ENCODE measurements at regions of chr3 and their contacts with region 1.

Region 1: DNA sequence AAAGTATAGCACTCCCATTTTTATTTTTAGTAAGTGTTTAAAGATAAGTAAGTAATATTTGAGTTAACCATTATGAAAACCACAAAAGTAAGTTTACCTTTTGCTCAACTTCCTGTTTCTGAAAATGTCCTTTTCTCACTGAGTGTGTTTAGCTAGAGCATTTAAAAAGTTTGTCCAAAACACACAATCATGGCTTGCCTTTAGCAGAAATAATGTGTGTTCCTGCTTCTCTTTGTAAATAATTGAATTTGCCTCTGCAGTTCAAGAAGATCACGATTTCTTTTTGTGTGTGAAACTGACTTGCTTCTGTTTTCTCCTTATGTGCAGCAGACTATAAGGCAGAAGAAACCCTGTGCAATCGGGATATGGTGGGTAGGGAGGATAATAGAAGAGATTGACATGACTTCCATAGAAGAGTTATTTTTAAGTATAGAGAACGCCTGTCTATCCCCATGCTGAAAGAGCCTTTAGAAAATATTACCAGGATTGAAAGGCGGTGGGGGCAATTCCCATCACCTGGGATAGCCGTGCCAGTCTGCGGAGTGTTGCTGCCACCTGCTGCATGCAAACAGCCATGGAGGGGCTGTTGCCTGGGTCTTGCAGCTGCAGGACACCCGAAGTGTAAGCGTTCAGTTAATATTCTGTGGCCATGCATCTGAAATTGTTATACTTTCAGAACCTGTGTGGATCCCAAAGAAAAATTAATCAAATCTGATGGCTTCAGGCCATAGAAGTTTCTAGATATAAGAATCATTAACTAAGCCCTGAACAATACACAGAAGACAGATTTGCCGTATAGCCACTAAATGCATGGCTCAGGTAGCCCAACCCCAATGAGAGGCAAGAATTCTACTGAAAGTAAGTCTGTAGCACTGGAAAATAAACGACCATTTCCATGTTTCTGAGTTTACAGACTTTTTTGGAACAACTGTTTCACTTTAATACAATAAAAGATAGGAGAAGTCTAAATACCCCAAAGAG is 2.4 kb upstream of the CD96 start:
- DNase-seq: peak; percentile 32 to 69 (median 57)
- ATAC-seq: peak; percentile 54
- H3K4me3 ChIP-seq: peak overlapping the region; percentile 40
- H3K4me3 Mint-ChIP-seq: peak overlapping the region; percentile 77 to 92 (median 82)
- H3K27ac ChIP-seq: peak overlapping the region; percentile 42
- H3K27ac Mint-ChIP-seq: peak overlapping the region in 5 of 9 donors; percentile 78 to 99 (median 98)
- H3K4me1 ChIP-seq: peaks cover 33 to 38% of the 10 kb centered on the region in 2 donors
- H3K4me1 Mint-ChIP-seq: peaks cover 27 to 65% (median 55%) of the 10 kb centered on the region in 7 donors
- H3K27me3 ChIP-seq: no peaks in the 10 kb centered on the region
- H3K27me3 Mint-ChIP-seq: no peaks in the 10 kb centered on the region

Region 2: GRCh38 chr3:110623571-110623970 is 916.1 kb before region 1 on chr3:
- CTCF ChIA-PET with region 1: no interaction called
- POLR2A ChIA-PET with region 1: no interaction called
- intact Hi-C with region 1: loop called in 1 of 2 experiments (anchors 10 kb)
- DNase-seq: no peak
- ATAC-seq: no peak
- H3K4me3 ChIP-seq: no peak overlapping the region
- H3K4me3 Mint-ChIP-seq: no peak overlapping the region
- H3K27ac ChIP-seq: no peak overlapping the region
- H3K27ac Mint-ChIP-seq: no peak overlapping the region
- H3K4me1 ChIP-seq: peaks cover 0 to 7% of the 10 kb centered on the region in 2 donors
- H3K4me1 Mint-ChIP-seq: peaks cover 0 to 29% (median 22%) of the 10 kb centered on the region in 7 donors
- H3K27me3 ChIP-seq: no peaks in the 10 kb centered on the region
- H3K27me3 Mint-ChIP-seq: peaks cover 0 to under 1% (median 0%) of the 10 kb centered on the region in 5 donors

Region 3: DNA sequence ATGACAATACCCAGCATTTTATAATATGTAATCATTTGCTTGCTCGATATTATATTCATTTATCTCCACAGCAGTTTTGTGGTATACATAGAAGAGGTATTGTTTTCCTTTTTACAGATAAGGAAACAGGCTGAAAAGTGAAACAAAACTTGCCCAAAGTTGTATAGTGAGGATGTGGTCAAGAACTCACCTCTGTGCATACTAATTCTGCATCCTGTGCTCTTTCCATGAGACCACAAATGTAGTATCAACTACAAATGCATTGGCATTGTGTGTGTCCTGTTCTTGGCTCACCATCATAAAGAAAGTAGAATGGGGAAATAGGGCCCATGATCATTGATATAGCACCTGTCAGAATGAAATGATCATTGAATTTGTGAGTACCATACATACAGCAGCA is 300.8 kb before region 1 on chr3:
- CTCF ChIA-PET with region 1: no interaction called
- POLR2A ChIA-PET with region 1: no interaction called
- intact Hi-C with region 1: loop called in 1 of 2 experiments (anchors 2 kb)
- DNase-seq: peak in 6 of 9 donors; percentile 16 to 47 (median 34)
- ATAC-seq: peak; percentile 75
- H3K4me3 ChIP-seq: no peak overlapping the region
- H3K4me3 Mint-ChIP-seq: peak overlapping the region in 8 of 10 donors; percentile 0 to 76 (median 54)
- H3K27ac ChIP-seq: peak overlapping the region; percentile 4
- H3K27ac Mint-ChIP-seq: peak overlapping the region; percentile 0 to 90 (median 64)
- H3K4me1 ChIP-seq: peaks cover 6 to 15% of the 10 kb centered on the region in 2 donors
- H3K4me1 Mint-ChIP-seq: peaks cover 11 to 47% (median 35%) of the 10 kb centered on the region in 7 donors
- H3K27me3 ChIP-seq: no peaks in the 10 kb centered on the region
- H3K27me3 Mint-ChIP-seq: no peaks in the 10 kb centered on the region

Region 4: DNA sequence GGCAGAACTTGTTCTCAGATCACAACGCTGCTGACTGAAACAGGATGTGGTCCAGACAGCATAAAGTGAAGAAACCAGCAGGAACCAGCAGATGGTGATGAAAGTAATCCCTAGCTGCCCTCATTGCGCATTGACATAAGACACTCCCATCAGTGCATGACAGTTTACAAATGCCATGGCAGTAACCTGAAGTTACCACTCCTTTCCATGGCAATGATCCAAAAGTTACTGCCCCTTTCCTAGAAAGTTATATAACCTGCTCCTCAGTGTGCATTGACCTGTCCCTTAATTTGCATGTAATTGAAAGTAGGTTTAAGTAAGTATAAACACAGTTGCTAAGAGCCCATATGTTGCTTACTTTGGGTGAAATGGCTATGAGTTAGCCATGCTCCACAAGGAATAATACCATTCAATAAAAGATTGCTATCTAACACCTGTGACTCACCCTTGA is 146.7 kb before region 1 on chr3:
- CTCF ChIA-PET with region 1: interaction called, 3 read pairs
- POLR2A ChIA-PET with region 1: no interaction called
- intact Hi-C with region 1: loop called (anchors 1 to 5 kb)
- DNase-seq: peak in 7 of 9 donors; percentile 40 to 78 (median 75)
- ATAC-seq: peak; percentile 99
- H3K4me3 ChIP-seq: no peak overlapping the region
- H3K4me3 Mint-ChIP-seq: peak overlapping the region in 9 of 10 donors; percentile 1 to 59 (median 22)
- H3K27ac ChIP-seq: peak overlapping the region; percentile 25
- H3K27ac Mint-ChIP-seq: peak overlapping the region in 8 of 9 donors; percentile 65 to 96 (median 88)
- H3K4me1 ChIP-seq: peaks cover 0 to 13% of the 10 kb centered on the region in 2 donors
- H3K4me1 Mint-ChIP-seq: peaks cover 10 to 29% (median 23%) of the 10 kb centered on the region in 7 donors
- H3K27me3 ChIP-seq: no peaks in the 10 kb centered on the region
- H3K27me3 Mint-ChIP-seq: no peaks in the 10 kb centered on the region

Region 5: DNA sequence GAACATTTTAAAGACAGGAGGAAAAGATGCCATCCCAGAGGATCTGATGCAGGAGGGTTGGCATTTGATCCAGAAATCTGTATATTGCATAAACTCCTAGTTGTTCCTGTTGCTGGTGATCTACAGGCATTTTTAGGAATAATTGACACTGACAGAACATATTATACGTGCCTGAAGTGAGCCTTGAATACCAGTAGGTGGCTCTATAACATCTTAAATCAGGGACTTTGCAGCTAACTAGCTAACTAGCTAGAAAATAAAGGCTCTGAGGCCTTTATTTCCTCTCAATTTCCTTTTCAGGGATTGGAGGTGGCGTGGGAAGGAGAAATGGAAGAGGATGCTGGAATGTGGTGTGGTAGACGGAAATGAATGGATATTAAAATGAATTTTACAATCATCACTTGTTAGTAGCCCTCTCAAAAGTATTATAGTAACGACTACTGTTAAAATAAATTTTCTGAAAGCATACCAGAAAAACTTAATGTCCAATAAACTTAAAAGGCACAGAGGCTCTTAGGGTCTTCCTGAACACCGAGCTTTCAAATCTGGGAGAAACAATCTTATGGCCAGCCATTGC is 129.4 kb after region 1 on chr3:
- CTCF ChIA-PET with region 1: no interaction called
- POLR2A ChIA-PET with region 1: interaction called, 3 read pairs
- intact Hi-C with region 1: loop called (anchors 1 kb)
- DNase-seq: peak in 7 of 9 donors; percentile 22 to 64 (median 53)
- ATAC-seq: peak; percentile 53
- H3K4me3 ChIP-seq: no peak overlapping the region
- H3K4me3 Mint-ChIP-seq: peak overlapping the region in 8 of 10 donors; percentile 20 to 74 (median 36)
- H3K27ac ChIP-seq: peak overlapping the region; percentile 14
- H3K27ac Mint-ChIP-seq: peak overlapping the region; percentile 26 to 94 (median 76)
- H3K4me1 ChIP-seq: peaks cover 52 to 59% of the 10 kb centered on the region in 2 donors
- H3K4me1 Mint-ChIP-seq: peaks cover 46 to 91% (median 85%) of the 10 kb centered on the region in 7 donors
- H3K27me3 ChIP-seq: no peaks in the 10 kb centered on the region
- H3K27me3 Mint-ChIP-seq: no peaks in the 10 kb centered on the region

Region 6: DNA sequence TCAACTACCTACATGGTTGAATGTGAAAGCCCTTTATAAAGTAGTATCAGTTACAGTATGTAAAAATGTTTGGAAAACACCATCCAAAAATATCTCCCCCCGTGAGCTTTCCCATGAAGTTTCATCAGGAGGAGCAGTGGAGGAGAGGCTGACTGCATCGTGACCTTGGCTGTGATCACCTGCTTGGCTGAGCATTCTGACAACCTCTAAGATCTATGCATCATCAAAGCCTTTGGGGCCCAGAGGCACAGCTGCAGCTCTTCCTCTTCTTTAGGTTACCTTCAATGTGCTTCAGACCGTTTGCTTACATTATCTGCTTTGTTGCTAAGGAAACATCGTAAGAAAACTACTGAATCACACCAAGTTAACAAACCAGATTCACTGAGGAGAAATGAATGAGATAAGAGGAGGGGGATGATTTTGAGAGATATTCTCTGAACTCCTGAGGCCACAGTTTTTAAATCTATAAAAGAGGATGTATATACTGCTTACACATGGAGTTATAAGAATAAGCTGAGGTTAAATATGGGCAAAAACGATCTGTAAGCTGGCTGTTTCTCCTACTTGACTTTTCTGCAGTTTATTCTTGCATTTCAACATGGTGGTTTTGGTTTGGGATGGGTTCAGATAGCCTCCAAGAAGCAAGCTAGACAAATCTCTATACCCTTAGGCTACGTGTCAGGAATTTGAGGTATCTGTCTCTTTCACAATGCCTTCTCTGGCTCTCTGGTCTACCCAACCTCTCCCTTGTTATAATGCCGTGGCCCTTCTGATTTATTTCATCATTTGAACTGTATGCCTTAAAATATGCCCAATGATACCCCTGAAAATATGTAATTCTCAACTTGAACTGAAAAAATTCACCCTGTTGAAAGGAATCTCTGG is 589.4 kb after region 1 on chr3:
- CTCF ChIA-PET with region 1: no interaction called
- POLR2A ChIA-PET with region 1: no interaction called
- intact Hi-C with region 1: loop called (anchors 2 to 5 kb)
- DNase-seq: peak in 8 of 9 donors; percentile 39 to 88 (median 83)
- ATAC-seq: peak; percentile 82
- H3K4me3 ChIP-seq: no peak overlapping the region
- H3K4me3 Mint-ChIP-seq: peak overlapping the region; percentile 23 to 100 (median 64)
- H3K27ac ChIP-seq: peak overlapping the region; percentile 82
- H3K27ac Mint-ChIP-seq: peak overlapping the region; percentile 87 to 95 (median 93)
- H3K4me1 ChIP-seq: peaks cover 41 to 72% of the 10 kb centered on the region in 2 donors
- H3K4me1 Mint-ChIP-seq: peaks cover 49 to 92% (median 90%) of the 10 kb centered on the region in 7 donors
- H3K27me3 ChIP-seq: no peaks in the 10 kb centered on the region
- H3K27me3 Mint-ChIP-seq: no peaks in the 10 kb centered on the region